ENCODE measurements at regions of chr9 and their contacts with region 1.

Region 1: GRCh38 chr9:1009101-1009707 is 32.7 kb downstream of the DMRT3 start:
- DNase-seq: peak; percentile 72
- CTCF ChIP-seq: peak; percentile 95

Region 2: GRCh38 chr9:613771-614347 is 395.3 kb before region 1 on chr9:
- in situ Hi-C with region 1: loop called (anchors 10 kb)
- DNase-seq: peak; percentile 74
- CTCF ChIP-seq: peak; percentile 79

Region 3: GRCh38 chr9:1429297-1429696 is 420.1 kb after region 1 on chr9:
- in situ Hi-C with region 1: no loop called
- DNase-seq: no peak
- CTCF ChIP-seq: peak; percentile 6